GM10248 (cell line): ENCODE measurements at regions of chr6 and their contacts with region 1.

Region 1: GRCh38 chr6:119259027-119259426 is 90.5 kb downstream of the MAN1A1 start:
- DNase-seq: no peak
- CTCF ChIP-seq: no peak

Region 2: GRCh38 chr6:119241111-119241465 is 17.9 kb before region 1 on chr6:
- CTCF ChIA-PET with region 1: interaction called, 10 read pairs
- POLR2A ChIA-PET with region 1: no interaction called
- DNase-seq: peak; percentile 8
- CTCF ChIP-seq: no peak

Region 3: DNA sequence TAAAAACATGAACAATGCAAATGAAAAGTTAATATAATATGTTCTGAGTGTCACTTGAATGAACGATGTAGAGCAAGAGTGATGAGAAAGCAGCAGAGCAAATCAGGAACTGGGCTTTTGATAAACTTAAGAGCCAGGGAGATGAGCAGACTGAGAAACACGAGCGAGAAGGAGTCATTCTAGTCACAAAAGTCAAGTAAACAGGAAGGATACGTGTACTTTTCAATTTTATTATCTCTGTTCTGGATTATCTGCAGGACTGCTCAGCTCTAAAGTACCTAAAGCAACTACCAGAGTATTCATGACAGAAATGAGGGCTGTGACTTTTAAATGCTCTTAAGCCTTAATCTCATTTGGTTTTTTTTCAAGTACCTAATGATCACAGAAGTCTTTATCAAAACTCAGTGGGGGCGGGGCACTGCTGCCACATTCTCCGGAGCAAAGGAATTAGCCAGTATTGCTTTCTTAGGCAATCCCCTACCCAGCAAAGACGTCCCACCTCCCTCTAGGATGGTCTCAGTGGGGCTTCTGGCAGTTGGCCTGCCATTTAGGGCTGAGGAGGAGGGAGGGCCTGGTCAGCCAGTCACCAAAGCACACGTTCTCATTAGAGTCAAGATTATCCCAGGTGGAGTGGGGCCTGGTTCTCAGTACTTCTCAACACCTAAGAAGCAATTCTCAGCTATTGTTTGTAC is 81.9 kb after region 1 on chr6:
- CTCF ChIA-PET with region 1: no interaction called
- POLR2A ChIA-PET with region 1: no interaction called
- DNase-seq: no peak
- CTCF ChIP-seq: no peak